ENCODE measurements at regions of chr22 and their contacts with region 1.

Region 1: DNA sequence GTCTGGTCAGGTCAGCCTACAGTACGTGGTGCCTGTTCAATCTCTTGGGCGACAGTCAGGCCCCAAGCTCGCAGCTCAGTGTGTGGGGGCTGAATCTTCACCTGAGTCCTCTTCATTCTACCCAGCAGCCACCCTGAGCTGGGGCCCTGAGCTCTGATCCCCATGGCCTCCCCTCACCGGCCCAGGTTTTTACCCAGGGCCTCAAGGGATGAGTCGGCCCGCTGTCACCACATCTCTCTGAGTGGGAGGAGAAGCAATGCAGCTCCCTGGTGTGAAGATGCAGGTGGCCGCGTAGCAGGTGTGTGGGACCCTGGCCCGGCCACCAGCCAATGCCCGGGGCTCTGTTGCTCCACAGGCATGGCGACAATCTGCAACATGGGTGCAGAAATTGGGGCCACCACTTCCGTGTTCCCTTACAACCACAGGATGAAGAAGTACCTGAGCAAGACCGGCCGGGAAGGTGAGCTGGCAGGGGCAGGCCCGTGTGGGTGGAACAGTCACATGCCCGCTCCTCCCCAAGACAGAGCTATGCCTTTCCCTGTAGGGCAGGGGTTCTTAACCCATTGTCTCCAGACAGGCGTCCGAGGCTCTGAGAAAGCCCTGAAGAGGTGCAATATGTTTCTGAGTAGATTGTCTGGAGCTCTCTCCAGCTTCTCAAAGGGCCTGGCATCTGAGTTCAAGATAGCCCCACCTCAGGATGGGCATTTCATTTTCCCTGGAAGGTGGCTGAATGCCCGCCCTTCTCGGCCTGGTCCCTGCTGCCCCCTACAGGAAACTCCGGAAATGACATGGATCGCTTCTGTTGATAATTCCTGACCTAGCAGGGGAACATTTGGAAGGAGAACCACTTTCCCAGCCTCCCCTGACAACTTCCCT is 26.9 kb downstream of the POLR3H start:
- DNase-seq: peak; percentile 53 to 79
- ATAC-seq: peak; percentile 41 to 56
- H3K4me3 ChIP-seq: no peak overlapping the region
- H3K27ac ChIP-seq: peak overlapping the region; percentile 96 to 98 (median 96)
- H3K4me1 ChIP-seq: peaks cover 41 to 49% of the 10 kb centered on the region in 2 donors
- H3K27me3 ChIP-seq: no peaks in the 10 kb centered on the region
- CTCF ChIP-seq: peak; percentile 91 to 95 (median 94)
- POLR2A ChIP-seq: no peak

Region 2: DNA sequence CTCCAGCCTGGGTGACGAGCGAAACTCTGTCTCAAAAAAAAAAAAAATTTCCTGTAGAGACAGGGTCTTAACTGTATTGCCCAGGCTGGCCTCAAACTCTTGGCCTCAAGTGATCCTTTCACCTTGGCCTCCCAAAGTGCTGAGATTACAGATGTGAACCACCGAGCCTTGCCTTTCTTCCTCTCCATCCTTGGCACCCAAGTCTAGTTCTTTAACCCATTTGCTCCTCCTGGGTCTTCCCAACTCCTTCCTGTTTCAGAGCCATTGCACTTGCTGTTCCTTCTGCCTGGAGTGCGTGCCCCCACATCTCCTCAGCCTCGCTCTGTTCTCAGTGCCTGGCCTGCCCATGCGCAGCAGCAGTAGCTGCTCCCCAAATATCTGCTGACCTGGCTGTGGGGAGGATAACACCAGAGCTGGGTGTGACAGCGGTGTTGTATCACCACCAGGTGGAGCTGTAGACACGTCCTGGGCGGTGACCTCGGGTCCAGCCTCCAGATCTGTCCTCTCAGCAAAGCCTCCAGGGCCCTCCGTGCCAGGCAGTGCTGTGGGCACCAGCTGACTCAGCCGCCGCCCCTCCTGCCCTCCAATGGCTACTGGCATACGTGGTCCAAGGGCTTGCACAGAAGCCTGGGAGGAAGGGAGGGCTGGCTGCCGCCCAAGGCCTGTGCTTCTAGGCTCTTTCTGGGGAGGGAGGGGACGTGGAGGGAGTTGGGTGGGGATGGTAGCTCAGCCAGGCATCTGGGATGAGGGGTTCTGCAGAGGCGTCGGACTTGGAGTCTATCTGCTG is 113.7 kb before region 1 on chr22:
- in situ Hi-C with region 1: loop called (anchors 5 kb)
- intact Hi-C with region 1: loop called (anchors 1 kb)
- DNase-seq: peak; percentile 96 to 99
- ATAC-seq: peak; percentile 74 to 90
- H3K4me3 ChIP-seq: no peak overlapping the region
- H3K27ac ChIP-seq: peak overlapping the region; percentile 78 to 88 (median 83)
- H3K4me1 ChIP-seq: peaks cover 22 to 26% of the 10 kb centered on the region in 2 donors
- H3K27me3 ChIP-seq: no peaks in the 10 kb centered on the region
- CTCF ChIP-seq: peak; percentile 98 to 99 (median 99)
- POLR2A ChIP-seq: no peak

Region 3: GRCh38 chr22:41468381-41469217 is 48.8 kb before region 1 on chr22 and contains the starts of genes ACO2 and PHF5A:
- in situ Hi-C with region 1: loop called in 1 of 4 experiments (anchors 5 kb)
- intact Hi-C with region 1: no loop called
- DNase-seq: peak; percentile 95 to 96
- ATAC-seq: peak; percentile 89 to 93
- H3K4me3 ChIP-seq: peak within 1 kb of the TSS; percentile 77 to 94 (median 88)
- H3K27ac ChIP-seq: peak within 1 kb of the TSS; percentile 96 to 98 (median 96)
- H3K4me1 ChIP-seq: peaks cover 44 to 51% of the 10 kb centered on the region in 2 donors
- H3K27me3 ChIP-seq: no peaks in the 10 kb centered on the region
- CTCF ChIP-seq: peak in 2 of 5 experiments; percentile 26 to 45
- POLR2A ChIP-seq: peak; percentile 93 to 95
- total RNA-seq, gene ACO2: 361 to 763 (median 473) TPM
- total RNA-seq, gene PHF5A: 33.8 to 43.5 (median 38.9) TPM

Region 4: DNA sequence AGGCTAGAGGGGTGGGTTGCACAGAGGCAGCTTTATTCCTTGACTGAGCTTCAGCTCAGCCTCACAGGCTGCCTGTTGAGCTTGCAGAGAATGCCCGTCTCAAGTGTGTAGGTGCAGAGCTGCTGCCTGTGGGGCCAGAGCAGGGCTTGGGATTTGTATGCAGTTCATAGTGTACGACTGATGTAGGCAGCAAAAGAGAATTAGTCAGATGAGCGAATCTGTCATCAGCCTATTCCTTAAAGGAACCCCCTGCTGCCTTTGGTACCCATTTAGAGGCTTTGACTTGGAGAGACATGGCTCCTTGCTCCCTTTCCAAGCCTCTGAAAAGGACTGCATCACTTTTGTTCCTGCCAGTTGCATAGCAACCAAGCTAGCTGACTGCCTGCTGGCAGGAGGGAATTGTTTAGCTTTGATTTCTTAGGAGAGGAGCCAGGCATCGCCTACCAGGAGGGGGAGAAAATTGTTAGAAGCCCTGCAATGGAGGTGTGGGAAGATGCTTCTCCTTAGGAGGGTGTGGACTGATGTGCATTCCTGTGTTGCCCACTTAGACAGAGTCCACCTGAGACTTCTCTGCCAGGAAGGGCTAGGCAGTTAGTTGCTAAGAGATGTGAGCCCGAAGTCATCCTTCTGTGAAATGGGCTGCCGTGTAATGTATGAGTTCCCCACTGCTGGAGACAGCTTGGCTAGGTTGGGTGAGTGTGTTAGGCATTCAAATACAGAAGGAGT is 37.6 kb before region 1 on chr22:
- in situ Hi-C with region 1: no loop called
- intact Hi-C with region 1: loop called (anchors 2 kb)
- DNase-seq: peak in 1 of 2 donors; percentile 52
- ATAC-seq: peak; percentile 6 to 21
- H3K4me3 ChIP-seq: peak overlapping the region in 2 of 4 donors; percentile 9 to 16
- H3K27ac ChIP-seq: peak overlapping the region; percentile 96 to 98 (median 96)
- H3K4me1 ChIP-seq: peaks cover 75 to 83% of the 10 kb centered on the region in 2 donors
- H3K27me3 ChIP-seq: no peaks in the 10 kb centered on the region
- CTCF ChIP-seq: no peak
- POLR2A ChIP-seq: no peak